Transverse colon (tissue), 4 donors: ENCODE measurements at regions of chr16 and their contacts with region 1.

Region 1: GRCh38 chr16:84484579-84485254 is 19.7 kb downstream of the MEAK7 start:
- DNase-seq: peak; percentile 55
- H3K4me3 ChIP-seq: no peak overlapping the region
- H3K27ac ChIP-seq: no peak overlapping the region
- H3K4me1 ChIP-seq: no peaks in the 10 kb centered on the region
- H3K27me3 ChIP-seq: no peaks in the 10 kb centered on the region
- CTCF ChIP-seq: peak; percentile 67 to 82 (median 70)
- EP300 ChIP-seq: no peak
- POLR2A ChIP-seq: no peak

Region 2: DNA sequence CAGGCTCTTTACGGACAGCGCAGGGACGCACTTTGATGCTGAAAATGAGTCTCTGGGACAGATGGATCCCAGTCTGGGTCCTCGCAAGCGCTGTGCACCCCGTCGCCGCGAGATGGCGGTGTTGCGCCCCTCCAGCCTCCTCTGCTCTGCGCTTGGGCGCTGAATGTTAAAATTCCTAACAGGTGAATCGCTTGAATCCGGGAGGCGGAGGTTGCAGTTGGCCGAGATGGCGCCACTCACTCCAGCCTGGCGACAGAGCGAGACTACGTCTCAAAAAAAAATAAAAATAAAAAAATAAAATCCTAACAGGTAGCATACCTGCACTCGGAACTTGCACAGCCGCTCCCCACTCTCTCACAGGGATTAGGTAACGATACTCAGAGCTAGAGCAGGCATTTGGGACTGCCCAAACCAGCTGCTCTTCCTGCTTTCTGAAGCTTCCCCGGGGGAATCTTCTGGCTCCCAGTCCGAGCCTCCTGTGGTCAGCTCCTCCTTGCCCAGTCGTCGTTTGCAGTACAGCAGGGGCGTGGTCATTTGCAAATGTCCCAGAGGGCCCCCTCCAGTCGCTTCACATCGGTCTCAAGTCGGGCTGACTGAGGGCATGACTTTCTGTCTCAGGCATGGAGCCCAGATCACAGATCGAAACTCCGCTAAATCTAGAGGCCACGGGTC is 557.9 kb before region 1 on chr16:
- in situ Hi-C with region 1: no loop called
- intact Hi-C with region 1: loop called (anchors 10 kb)
- DNase-seq: peak; percentile 84
- H3K4me3 ChIP-seq: peak overlapping the region in 3 of 4 donors; percentile 8 to 30 (median 8)
- H3K27ac ChIP-seq: peak overlapping the region in 2 of 4 donors; percentile 7 to 15
- H3K4me1 ChIP-seq: peaks cover 4 to 6% (median 6%) of the 10 kb centered on the region in 4 donors
- H3K27me3 ChIP-seq: no peaks in the 10 kb centered on the region
- CTCF ChIP-seq: peak; percentile 79 to 97 (median 95)
- EP300 ChIP-seq: no peak
- POLR2A ChIP-seq: no peak

Region 3: GRCh38 chr16:83952940-83953795 is 531.5 kb before region 1 on chr16 and contains the start of gene OSGIN1:
- in situ Hi-C with region 1: loop called in 2 of 4 experiments (anchors 25 kb)
- intact Hi-C with region 1: no loop called
- DNase-seq: peak; percentile 96
- H3K4me3 ChIP-seq: peak within 1 kb of the TSS; percentile 48 to 73 (median 54)
- H3K27ac ChIP-seq: peak within 1 kb of the TSS; percentile 91 to 96 (median 94)
- H3K4me1 ChIP-seq: peaks cover 11 to 30% (median 22%) of the 10 kb centered on the region in 4 donors
- H3K27me3 ChIP-seq: no peaks in the 10 kb centered on the region
- CTCF ChIP-seq: no peak
- EP300 ChIP-seq: no peak
- POLR2A ChIP-seq: peak; percentile 98
- total RNA-seq, gene OSGIN1: 10.7 to 26.2 (median 16.7) TPM

Region 4: DNA sequence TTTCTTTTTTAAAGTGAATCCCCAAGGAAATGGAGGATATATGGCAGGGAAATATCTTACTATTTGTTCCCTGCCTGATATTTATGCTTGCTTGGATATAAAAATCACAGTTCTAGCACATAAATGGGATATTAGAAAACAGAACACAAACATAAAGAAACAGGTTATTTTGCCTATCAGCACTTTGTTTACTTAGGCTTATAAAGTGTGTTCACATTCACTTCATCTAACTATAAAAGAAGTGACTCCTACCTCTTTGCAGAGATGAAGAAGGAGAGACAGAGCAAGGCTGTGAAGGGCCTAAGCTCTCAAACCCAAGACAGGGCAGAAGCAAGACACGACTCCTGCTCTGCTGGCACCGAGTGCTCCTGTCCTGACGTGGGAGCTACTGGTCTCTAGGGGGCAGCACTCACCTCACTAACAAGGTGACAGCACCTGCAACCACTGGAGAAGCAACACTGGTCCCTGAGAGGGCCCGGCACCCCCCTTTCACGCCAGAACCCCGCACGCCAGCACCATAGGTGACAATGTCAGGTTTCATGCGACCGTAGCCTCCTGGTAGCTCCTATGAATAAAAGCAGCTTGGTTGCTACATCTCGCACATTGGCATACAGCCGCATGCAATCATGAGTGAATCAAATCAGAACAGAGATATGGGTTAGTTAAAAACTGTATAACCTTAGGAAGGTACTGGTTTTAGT is 400.0 kb before region 1 on chr16:
- in situ Hi-C with region 1: loop called in 1 of 4 experiments (anchors 25 kb)
- intact Hi-C with region 1: no loop called
- DNase-seq: peak; percentile 74
- H3K4me3 ChIP-seq: no peak overlapping the region
- H3K27ac ChIP-seq: no peak overlapping the region
- H3K4me1 ChIP-seq: peaks cover 0 to 3% (median 0%) of the 10 kb centered on the region in 4 donors
- H3K27me3 ChIP-seq: no peaks in the 10 kb centered on the region
- CTCF ChIP-seq: peak; percentile 58 to 70 (median 65)
- EP300 ChIP-seq: no peak
- POLR2A ChIP-seq: no peak

Region 5: DNA sequence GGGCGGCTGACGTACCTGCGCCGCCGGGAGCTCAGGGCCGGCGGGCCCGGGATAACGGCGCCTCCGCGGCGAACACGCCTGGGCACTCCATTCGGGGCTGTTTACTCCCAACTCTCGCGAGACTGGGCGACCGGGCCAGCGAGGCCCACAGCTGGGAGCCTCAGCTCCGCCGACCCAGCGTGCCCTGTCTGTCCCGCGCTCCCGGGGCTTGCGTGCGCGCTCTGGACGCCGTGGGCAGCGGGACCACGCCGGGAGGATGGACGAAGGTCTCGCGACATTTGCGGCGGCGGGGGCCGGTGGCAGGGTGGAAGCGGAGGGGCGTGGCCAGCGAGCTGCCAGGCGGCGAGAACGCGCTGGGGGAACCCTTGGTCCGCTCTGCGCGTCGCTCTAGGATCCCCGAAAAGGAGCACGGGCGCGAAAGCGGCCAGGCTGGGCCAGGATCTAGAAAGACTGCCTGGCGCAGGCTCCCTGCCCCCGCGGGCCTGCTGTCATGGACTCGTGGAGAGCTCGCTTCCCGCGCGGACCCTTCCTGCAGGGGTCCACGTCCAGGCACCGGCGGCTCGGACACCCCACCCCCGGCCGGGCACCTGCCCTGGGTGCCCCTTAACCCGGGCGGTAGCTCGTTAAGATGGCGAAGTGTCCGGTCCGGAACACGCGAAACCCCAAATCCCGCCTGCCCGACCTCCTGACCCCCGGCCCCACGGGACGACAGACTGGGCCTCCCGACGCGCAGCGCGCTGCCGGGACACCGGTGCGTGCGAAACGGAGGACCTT is 367.8 kb before region 1 on chr16 and contains the start of gene MBTPS1:
- in situ Hi-C with region 1: loop called in 1 of 4 experiments (anchors 25 kb)
- intact Hi-C with region 1: no loop called
- DNase-seq: peak; percentile 99
- H3K4me3 ChIP-seq: peak within 1 kb of the TSS; percentile 80 to 97 (median 94)
- H3K27ac ChIP-seq: peak within 1 kb of the TSS; percentile 90 to 98 (median 94)
- H3K4me1 ChIP-seq: peaks cover 14 to 35% (median 19%) of the 10 kb centered on the region in 4 donors
- H3K27me3 ChIP-seq: no peaks in the 10 kb centered on the region
- CTCF ChIP-seq: no peak
- EP300 ChIP-seq: no peak
- POLR2A ChIP-seq: peak; percentile 74
- total RNA-seq, gene MBTPS1: 53.7 to 110 (median 97.0) TPM

Region 6: GRCh38 chr16:84277237-84277823 is 207.4 kb before region 1 on chr16:
- in situ Hi-C with region 1: loop called (anchors 5 to 10 kb)
- intact Hi-C with region 1: loop called (anchors 10 kb)
- DNase-seq: peak; percentile 76
- H3K4me3 ChIP-seq: no peak overlapping the region
- H3K27ac ChIP-seq: no peak overlapping the region
- H3K4me1 ChIP-seq: no peaks in the 10 kb centered on the region
- H3K27me3 ChIP-seq: no peaks in the 10 kb centered on the region
- CTCF ChIP-seq: peak; percentile 85 to 93 (median 91)
- EP300 ChIP-seq: no peak
- POLR2A ChIP-seq: no peak

Region 7: DNA sequence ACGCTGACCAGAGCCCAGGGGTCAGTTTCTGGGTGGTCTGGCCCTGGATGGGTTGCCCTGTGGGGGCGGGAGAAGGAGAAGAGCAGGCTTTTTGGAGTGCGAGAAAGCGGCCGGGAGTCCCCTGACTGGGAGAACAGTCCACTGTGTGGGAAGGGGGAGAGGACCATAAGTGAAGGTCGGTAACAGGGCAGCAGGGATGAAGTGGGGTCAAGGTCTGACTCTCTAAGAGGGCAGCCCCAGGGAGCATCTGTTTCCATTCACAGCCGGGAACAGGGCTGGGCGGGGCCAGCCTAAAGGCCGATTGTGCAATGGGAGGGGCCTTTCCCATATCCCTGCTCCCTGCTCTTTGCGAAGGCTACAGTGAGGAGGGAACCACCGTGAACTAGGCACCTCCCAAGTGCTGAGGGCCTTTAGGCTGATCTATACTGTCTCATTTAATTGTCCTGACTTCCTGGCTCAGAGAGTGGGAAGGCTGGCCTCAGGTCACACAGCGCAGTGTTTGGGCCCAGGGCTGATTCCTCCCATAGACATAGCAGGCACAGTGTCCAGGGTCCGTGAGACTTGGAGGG is 200.5 kb before region 1 on chr16:
- in situ Hi-C with region 1: loop called (anchors 5 to 10 kb)
- intact Hi-C with region 1: loop called (anchors 10 kb)
- DNase-seq: peak; percentile 61
- H3K4me3 ChIP-seq: no peak overlapping the region
- H3K27ac ChIP-seq: peak overlapping the region; percentile 53 to 68 (median 58)
- H3K4me1 ChIP-seq: peaks cover 8 to 29% (median 16%) of the 10 kb centered on the region in 4 donors
- H3K27me3 ChIP-seq: no peaks in the 10 kb centered on the region
- CTCF ChIP-seq: no peak
- EP300 ChIP-seq: no peak
- POLR2A ChIP-seq: no peak

Region 8: GRCh38 chr16:84652566-84652965 is 167.8 kb after region 1 on chr16:
- in situ Hi-C with region 1: no loop called
- intact Hi-C with region 1: no loop called
- DNase-seq: no peak
- H3K4me3 ChIP-seq: no peak overlapping the region
- H3K27ac ChIP-seq: no peak overlapping the region
- H3K4me1 ChIP-seq: peaks cover 4 to 18% (median 11%) of the 10 kb centered on the region in 4 donors
- H3K27me3 ChIP-seq: no peaks in the 10 kb centered on the region
- CTCF ChIP-seq: no peak
- EP300 ChIP-seq: no peak
- POLR2A ChIP-seq: no peak